Mammary epithelial cell (primary cell): ENCODE measurements at regions of chr14 and their contacts with region 1.

Region 1: DNA sequence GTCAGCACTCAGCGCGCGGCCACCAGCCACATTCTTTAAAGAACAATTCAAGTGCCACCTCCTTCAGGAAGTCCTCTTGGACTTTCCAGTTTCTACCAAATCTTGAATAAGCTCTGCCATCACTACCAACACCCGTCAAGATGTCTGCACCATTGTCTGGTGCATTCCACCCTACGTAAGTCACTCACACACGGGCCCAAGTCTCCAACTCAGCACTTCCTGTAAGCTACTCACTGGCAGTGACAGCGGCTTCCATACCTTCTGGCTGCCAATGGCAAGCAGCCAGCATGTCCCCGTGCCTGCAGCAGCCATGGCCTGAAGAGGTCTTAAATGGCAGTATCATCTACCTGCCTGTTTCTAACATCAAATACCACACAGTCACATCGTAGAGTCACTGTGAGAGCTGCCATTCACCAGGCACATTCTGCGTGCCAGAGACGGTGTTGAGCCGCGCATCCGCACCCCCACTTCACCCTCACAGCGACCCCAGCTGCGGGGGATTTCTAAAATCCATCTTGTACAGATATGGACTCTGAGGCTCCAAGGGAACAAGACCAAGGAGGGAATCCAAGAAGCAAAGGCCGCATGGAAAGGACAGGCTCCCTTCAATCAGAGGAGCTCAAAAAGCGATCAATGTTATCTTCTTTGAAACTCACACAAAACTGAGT is 48.3 kb downstream of the CDC42BPB start:
- DNase-seq: no peak
- H3K4me3 ChIP-seq: no peak overlapping the region
- H3K27ac ChIP-seq: no peak overlapping the region
- H3K4me1 ChIP-seq: peaks cover under 1% of the 10 kb centered on the region
- H3K27me3 ChIP-seq: no peaks in the 10 kb centered on the region
- CTCF ChIP-seq: no peak

Region 2: DNA sequence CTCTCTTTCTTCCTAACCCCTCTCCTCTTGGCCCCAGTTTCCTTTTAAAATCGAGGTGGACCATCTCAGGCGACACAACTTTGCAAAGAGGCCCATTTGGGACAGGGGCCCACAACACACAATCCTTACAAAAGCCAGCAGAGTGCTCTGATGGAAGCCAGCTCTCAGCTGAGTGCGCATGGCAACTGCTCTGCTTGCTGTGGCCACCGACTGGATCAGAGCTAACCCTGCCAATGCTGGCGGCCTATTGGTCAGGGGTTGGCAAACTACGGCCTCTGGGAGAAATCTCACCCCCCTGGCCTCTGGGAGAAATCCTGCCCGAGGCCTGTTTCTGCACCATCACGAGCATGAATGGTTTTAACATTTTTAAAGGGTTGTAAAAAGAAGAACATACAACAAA is 31.6 kb before region 1 on chr14:
- CTCF ChIA-PET with region 1: interaction called, 18 read pairs
- dilution Hi-C with region 1: no loop called
- in situ Hi-C with region 1: no loop called
- intact Hi-C with region 1: no loop called
- DNase-seq: no peak
- H3K4me3 ChIP-seq: no peak overlapping the region
- H3K27ac ChIP-seq: no peak overlapping the region
- H3K4me1 ChIP-seq: no peaks in the 10 kb centered on the region
- H3K27me3 ChIP-seq: no peaks in the 10 kb centered on the region
- CTCF ChIP-seq: no peak

Region 3: DNA sequence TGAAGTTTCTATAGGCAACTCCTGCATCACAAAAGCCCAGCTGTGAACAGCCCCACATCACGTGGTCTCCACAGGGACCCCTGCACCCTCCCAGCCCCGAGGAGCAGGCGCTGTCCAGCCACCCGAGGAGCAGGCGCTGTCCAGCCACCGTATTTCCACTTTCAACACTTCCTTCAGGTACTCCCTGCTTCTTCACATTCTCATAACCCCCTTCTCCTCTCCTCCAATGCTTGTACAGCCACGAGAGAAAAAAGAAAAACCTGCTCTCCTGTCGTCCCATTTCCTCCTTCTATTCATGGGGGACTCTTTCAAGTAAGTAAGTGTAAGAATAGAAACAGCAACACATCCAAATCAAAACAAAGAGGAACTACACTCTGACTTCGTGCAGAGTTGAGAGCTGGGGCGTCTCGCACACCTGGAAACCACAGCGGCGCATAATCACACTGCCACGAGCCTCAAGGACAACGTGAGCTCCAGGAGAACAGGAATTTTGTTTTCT is 36.4 kb after region 1 on chr14:
- CTCF ChIA-PET with region 1: no interaction called
- dilution Hi-C with region 1: no loop called
- in situ Hi-C with region 1: no loop called
- intact Hi-C with region 1: no loop called
- DNase-seq: no peak
- H3K4me3 ChIP-seq: no peak overlapping the region
- H3K27ac ChIP-seq: no peak overlapping the region
- H3K4me1 ChIP-seq: no peaks in the 10 kb centered on the region
- H3K27me3 ChIP-seq: no peaks in the 10 kb centered on the region
- CTCF ChIP-seq: no peak